Body of pancreas (tissue), 4 donors: ENCODE measurements at regions of chr10 and their contacts with region 1.

Region 1: DNA sequence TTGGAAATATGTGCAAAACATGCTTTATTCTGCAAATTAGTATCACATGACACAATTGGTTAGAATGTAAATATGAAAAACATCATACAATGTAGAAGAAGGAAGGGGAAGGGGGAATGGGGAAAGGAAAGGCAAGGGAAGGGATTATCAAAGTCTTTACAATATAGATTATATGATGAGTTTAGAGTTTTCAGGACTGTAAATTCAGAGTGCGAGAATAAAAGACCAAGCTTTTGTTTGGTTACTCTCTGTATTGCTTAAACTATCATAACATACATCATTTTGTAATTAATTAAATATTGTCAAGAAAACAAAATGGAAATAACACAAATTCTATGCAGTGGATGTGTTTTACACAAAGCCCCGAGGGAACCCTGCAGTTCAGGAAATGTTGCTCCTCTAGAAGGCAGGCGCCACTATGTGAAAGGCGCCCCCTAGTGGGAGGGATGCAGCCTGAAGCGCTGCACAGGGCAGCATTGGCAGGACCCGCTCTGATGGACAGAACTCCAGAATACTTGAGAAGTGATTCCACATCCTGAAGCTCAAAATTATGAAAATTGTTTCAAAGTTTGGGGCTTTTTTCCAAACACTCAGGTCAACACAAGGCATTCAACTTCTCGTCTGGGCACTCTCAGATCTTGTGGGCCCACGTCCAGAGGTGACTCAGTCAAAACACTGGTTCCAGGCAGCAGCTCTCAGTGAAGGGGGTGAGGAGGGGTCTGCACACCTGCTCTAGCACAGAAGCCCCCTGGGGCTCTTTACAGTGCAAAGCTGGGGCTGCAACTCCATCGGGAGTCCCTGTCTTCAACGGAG is 31.6 kb upstream of the TMEM254 start:
- DNase-seq: peak; percentile 79 to 88 (median 81)
- ATAC-seq: peak; percentile 87
- H3K4me3 ChIP-seq: no peak overlapping the region
- H3K27ac ChIP-seq: no peak overlapping the region
- H3K4me1 ChIP-seq: no peaks in the 10 kb centered on the region
- H3K27me3 ChIP-seq: no peaks in the 10 kb centered on the region
- CTCF ChIP-seq: peak; percentile 74 to 99 (median 82)
- POLR2A ChIP-seq: no peak

Region 2: DNA sequence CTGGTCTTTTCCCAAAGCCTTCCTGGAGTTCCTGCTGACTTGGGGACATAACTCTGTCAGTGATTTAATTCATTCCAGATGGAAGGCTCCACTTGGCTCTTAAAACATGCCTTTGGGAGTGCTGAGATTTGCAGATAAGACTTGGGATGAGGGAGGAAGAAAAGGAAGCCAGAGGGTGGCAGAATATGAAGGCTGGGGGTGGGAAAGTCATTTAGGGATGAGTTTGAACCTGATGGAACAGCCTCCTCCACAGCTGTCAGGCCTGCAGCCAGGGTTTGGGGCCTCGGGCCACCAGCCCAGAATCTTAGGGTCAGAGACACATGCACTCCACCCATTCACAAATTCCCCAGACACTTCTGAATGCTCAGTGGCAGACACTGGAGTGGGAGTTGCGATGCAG is 562.9 kb before region 1 on chr10:
- intact Hi-C with region 1: no loop called
- DNase-seq: peak in 1 of 4 donors; percentile 41
- ATAC-seq: peak; percentile 48
- H3K4me3 ChIP-seq: no peak overlapping the region
- H3K27ac ChIP-seq: peak overlapping the region in 1 of 4 donors; percentile 31
- H3K4me1 ChIP-seq: no peaks in the 10 kb centered on the region
- H3K27me3 ChIP-seq: no peaks in the 10 kb centered on the region
- CTCF ChIP-seq: no peak
- POLR2A ChIP-seq: no peak

Region 3: DNA sequence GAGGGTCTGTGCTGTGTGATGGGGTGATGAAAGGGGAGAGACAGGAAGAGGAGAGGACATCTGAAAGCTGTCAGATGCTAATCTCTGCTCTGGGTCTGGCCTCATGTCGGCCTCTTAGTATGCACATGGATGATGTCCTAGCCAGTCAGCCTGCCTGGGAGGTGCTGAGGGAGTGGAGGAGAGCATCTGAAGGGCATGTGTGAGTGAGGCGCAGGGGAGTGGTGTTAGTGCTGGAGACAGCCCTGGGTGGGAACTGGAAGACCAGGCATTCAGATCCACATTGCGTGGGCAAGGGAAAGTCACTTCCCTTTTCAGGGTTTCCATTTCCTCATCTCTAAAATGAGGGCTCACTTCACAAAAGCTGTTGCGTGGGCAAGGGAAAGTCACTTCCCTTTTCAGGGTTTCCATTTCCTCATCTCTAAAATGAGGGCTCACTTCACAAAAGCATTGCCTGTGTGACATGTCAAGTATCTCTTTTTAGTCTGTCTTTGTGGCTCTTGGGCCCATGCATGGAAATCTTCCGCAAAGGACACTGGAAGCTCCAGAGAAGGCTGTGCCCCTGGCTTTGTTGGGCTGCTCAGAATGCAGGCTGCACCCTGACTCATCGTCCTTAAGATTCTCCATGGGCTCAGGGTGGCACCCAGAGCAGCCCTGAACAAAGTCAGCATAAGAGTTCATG is 108.0 kb before region 1 on chr10:
- intact Hi-C with region 1: loop called (anchors 10 kb)
- DNase-seq: peak in 1 of 4 donors; percentile 71
- ATAC-seq: no peak
- H3K4me3 ChIP-seq: no peak overlapping the region
- H3K27ac ChIP-seq: no peak overlapping the region
- H3K4me1 ChIP-seq: no peaks in the 10 kb centered on the region
- H3K27me3 ChIP-seq: no peaks in the 10 kb centered on the region
- CTCF ChIP-seq: no peak
- POLR2A ChIP-seq: no peak

Region 4: GRCh38 chr10:79981450-79982361 is 65.1 kb before region 1 on chr10:
- intact Hi-C with region 1: no loop called
- DNase-seq: peak; percentile 78 to 85 (median 83)
- ATAC-seq: peak; percentile 85
- H3K4me3 ChIP-seq: peak overlapping the region; percentile 70 to 78
- H3K27ac ChIP-seq: peak overlapping the region; percentile 83 to 97 (median 95)
- H3K4me1 ChIP-seq: peaks cover 34% of the 10 kb centered on the region
- H3K27me3 ChIP-seq: no peaks in the 10 kb centered on the region
- CTCF ChIP-seq: peak in 5 of 7 experiments; percentile 5 to 17 (median 16)
- POLR2A ChIP-seq: peak; percentile 79 to 91 (median 85)